CD4-positive, alpha-beta memory T cell (primary cell): ENCODE measurements at regions of chr1 and their contacts with region 1.

Region 1: GRCh38 chr1:66380452-66381212 is 153.3 kb upstream of the SGIP1 start:
- DNase-seq: no peak
- H3K4me3 ChIP-seq: no peak overlapping the region
- H3K4me3 Mint-ChIP-seq: peak overlapping the region; percentile 40 to 84 (median 56)
- H3K27ac ChIP-seq: no peak overlapping the region
- H3K27ac Mint-ChIP-seq: peak overlapping the region in 6 of 7 donors; percentile 6 to 79 (median 40)
- H3K4me1 ChIP-seq: peaks cover 24% of the 10 kb centered on the region
- H3K4me1 Mint-ChIP-seq: peaks cover 25 to 37% (median 31%) of the 10 kb centered on the region in 4 donors
- H3K27me3 ChIP-seq: no peaks in the 10 kb centered on the region
- H3K27me3 Mint-ChIP-seq: no peaks in the 10 kb centered on the region

Region 2: GRCh38 chr1:66365635-66366034 is 15.0 kb before region 1 on chr1:
- CTCF ChIA-PET with region 1: no interaction called
- POLR2A ChIA-PET with region 1: interaction called, 3 read pairs
- intact Hi-C with region 1: loop called (anchors 2 kb)
- DNase-seq: no peak
- H3K4me3 ChIP-seq: no peak overlapping the region
- H3K4me3 Mint-ChIP-seq: no peak overlapping the region
- H3K27ac ChIP-seq: no peak overlapping the region
- H3K27ac Mint-ChIP-seq: peak overlapping the region; percentile 30 to 76 (median 64)
- H3K4me1 ChIP-seq: peaks cover 76% of the 10 kb centered on the region
- H3K4me1 Mint-ChIP-seq: peaks cover 46 to 86% (median 63%) of the 10 kb centered on the region in 4 donors
- H3K27me3 ChIP-seq: no peaks in the 10 kb centered on the region
- H3K27me3 Mint-ChIP-seq: no peaks in the 10 kb centered on the region

Region 3: DNA sequence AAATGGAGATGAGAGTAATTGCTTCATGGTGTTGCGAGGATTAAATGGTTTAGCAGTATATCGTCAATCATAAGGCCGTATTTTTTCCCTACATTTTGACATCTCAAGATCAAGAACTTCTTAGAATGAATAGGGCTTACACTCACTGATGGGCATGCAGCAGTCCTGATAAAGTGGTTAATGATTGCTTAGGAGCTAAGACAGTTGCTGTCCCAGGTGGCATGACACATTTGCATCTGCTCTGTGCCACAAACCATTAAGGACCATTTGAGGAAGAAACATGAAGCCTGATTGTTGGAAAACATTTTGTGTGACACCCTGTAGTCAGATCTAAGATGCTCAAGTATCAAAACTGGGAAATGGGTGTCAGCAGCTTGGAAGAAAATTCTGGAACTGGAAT is 72.3 kb after region 1 on chr1:
- CTCF ChIA-PET with region 1: no interaction called
- POLR2A ChIA-PET with region 1: no interaction called
- intact Hi-C with region 1: no loop called
- DNase-seq: no peak
- H3K4me3 ChIP-seq: no peak overlapping the region
- H3K4me3 Mint-ChIP-seq: no peak overlapping the region
- H3K27ac ChIP-seq: no peak overlapping the region
- H3K27ac Mint-ChIP-seq: no peak overlapping the region
- H3K4me1 ChIP-seq: no peaks in the 10 kb centered on the region
- H3K4me1 Mint-ChIP-seq: no peaks in the 10 kb centered on the region
- H3K27me3 ChIP-seq: no peaks in the 10 kb centered on the region
- H3K27me3 Mint-ChIP-seq: peaks cover 2 to 3% of the 10 kb centered on the region in 2 donors

Region 4: DNA sequence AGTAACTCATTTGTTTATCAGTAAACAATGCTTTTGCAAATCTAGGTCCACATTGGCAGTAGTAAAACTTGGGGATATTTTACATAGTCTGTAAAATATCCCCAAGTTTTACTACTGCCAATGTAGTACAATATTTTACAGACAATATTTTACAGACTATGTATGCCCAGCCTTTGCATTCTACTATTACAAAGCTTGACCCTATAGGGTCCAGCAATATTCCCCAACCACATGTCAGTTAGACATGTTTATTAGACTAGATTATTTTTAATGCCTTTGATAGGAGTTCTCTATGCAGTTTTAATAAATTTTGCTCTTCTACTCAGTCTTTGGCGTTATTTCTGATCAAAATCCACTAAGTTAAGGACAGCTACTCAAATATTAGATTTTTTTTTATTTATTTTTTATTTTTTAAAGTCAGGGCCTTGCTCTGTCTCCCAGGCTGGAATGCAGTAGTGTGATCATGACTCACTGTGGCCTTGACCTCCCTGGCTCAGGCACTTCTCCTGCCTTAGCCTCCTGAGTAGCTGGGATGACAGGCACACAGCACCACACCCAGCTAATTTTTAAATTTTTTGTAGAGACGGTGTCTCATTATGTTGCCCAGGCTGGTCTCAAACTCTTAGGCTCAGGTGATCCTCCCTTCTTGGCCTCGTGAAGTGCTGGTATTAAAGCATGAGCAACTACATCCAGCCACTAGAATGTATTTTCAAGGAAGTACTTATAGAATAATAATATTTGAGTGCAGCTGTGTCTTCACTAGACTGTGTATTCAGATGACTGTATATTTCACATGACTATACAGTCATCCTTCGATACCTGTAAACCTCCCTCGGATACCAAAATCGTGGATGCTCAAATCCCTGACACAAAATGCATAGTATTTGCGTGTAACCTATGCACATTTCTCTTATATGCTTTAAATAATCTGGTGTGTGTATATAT is 564.0 kb after region 1 on chr1:
- CTCF ChIA-PET with region 1: no interaction called
- POLR2A ChIA-PET with region 1: no interaction called
- intact Hi-C with region 1: no loop called
- DNase-seq: no peak
- H3K4me3 ChIP-seq: no peak overlapping the region
- H3K4me3 Mint-ChIP-seq: no peak overlapping the region
- H3K27ac ChIP-seq: no peak overlapping the region
- H3K27ac Mint-ChIP-seq: peak overlapping the region in 2 of 7 donors; percentile 15 to 62
- H3K4me1 ChIP-seq: peaks cover 63% of the 10 kb centered on the region
- H3K4me1 Mint-ChIP-seq: peaks cover 48 to 84% (median 63%) of the 10 kb centered on the region in 4 donors
- H3K27me3 ChIP-seq: no peaks in the 10 kb centered on the region
- H3K27me3 Mint-ChIP-seq: no peaks in the 10 kb centered on the region